ENCODE measurements at regions of chr4 and their contacts with region 1.

Region 1: GRCh38 chr4:158094413-158095134 is 78.3 kb downstream of the GASK1B start:
- DNase-seq: peak; percentile 78 to 80
- H3K4me3 ChIP-seq: no peak overlapping the region
- H3K4me3 Mint-ChIP-seq: peak overlapping the region; percentile 60
- H3K27ac Mint-ChIP-seq: peak overlapping the region; percentile 82
- H3K4me1 ChIP-seq: peaks cover 8% of the 10 kb centered on the region
- H3K4me1 Mint-ChIP-seq: peaks cover 12% of the 10 kb centered on the region
- H3K27me3 ChIP-seq: no peaks in the 10 kb centered on the region
- H3K27me3 Mint-ChIP-seq: no peaks in the 10 kb centered on the region
- CTCF ChIP-seq: no peak

Region 2: DNA sequence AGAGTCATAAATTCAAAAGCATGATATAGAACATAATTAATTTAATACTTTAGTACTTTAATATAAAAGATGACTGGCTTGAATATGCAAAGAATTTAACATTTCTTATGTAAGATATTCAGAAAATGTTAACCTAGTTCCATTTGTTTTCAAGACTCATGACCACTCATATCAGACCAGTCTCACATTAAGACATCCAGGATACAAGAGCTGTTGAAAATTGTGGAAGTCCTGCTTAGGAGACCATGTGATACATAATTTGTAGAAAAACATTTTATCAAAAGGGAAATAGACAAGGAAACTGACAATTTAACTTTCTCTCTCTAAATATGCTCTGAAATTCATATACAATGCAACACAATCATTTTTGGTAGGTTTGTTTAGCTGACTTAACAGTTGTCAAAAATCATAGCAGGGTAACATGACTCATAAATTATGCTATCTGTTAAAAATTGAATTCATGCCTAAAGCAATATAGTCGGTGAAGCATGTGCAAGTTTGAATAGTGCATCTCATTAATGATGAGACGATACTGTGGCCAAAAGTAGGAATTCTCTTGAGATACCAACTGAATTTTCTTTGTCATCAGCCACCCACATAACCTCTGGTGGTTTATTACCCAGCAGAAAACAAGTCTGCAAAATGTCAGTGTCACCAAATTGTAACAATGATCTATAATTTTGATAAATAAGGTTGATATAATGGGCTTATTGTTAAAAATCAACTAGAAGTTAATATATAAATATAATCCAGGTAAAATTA is 133.2 kb before region 1 on chr4:
- CTCF ChIA-PET with region 1: no interaction called
- POLR2A ChIA-PET with region 1: no interaction called
- intact Hi-C with region 1: no loop called
- DNase-seq: no peak
- H3K4me3 ChIP-seq: no peak overlapping the region
- H3K4me3 Mint-ChIP-seq: no peak overlapping the region
- H3K27ac Mint-ChIP-seq: no peak overlapping the region
- H3K4me1 ChIP-seq: no peaks in the 10 kb centered on the region
- H3K4me1 Mint-ChIP-seq: no peaks in the 10 kb centered on the region
- H3K27me3 ChIP-seq: no peaks in the 10 kb centered on the region
- H3K27me3 Mint-ChIP-seq: peaks cover 2% of the 10 kb centered on the region
- CTCF ChIP-seq: no peak

Region 3: GRCh38 chr4:158033416-158034120 is 61.0 kb before region 1 on chr4:
- CTCF ChIA-PET with region 1: no interaction called
- POLR2A ChIA-PET with region 1: no interaction called
- intact Hi-C with region 1: loop called (anchors 10 kb)
- DNase-seq: no peak
- H3K4me3 ChIP-seq: no peak overlapping the region
- H3K4me3 Mint-ChIP-seq: peak overlapping the region; percentile 59
- H3K27ac Mint-ChIP-seq: peak overlapping the region; percentile 16
- H3K4me1 ChIP-seq: peaks cover 3% of the 10 kb centered on the region; the same call in 1 of the 2 replicates
- H3K4me1 Mint-ChIP-seq: peaks cover 10% of the 10 kb centered on the region
- H3K27me3 ChIP-seq: no peaks in the 10 kb centered on the region
- H3K27me3 Mint-ChIP-seq: no peaks in the 10 kb centered on the region
- CTCF ChIP-seq: no peak

Region 4: DNA sequence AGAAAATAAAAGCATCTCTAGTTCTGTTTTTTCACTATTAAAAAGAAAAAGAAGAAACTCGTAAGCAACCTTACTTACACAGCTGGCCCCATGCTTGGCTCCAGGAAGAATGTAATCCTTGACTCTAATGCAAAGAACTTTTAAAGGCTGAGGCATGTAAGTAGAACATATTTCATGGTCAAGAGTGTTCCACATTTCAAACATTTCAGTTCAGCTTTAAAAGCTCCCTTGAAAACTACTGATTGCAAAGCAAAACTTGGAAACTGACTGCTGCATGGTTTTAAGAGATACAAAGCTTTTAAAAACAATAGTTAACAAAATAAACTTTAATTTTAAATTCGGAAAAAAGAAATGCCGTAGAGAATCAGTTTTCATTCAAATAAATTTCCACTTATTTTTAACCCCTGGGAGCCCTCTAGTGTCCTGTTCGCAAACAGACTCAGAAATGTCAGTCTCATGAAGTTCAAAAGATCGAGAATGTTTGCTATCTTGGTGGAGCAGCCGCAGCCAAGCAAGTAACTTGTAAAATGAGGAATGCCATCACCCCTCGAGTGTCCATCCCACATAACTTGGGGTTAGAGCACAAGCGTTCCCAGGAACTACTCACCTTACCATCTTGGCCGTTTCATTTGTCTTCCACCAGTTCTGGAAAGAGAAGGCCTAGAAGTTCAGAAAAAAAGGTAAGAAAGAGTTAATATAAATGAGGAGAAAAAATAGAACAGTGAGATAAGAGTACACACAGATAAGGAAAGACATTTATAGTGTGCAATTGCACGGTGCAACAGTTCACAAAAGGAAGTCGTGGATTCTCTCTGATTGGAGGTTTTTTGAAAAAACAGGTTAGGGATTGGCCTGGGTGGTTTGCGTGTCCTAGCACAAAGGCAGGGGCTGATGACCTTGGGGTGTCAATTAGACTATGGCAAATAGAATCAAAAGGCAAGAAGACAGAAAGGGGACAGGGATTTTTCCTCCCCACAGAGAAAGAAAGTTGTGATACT is 78.0 kb after region 1 on chr4 and contains the start of gene GASK1B:
- CTCF ChIA-PET with region 1: no interaction called
- POLR2A ChIA-PET with region 1: no interaction called
- intact Hi-C with region 1: loop called (anchors 2 kb)
- DNase-seq: peak; percentile 56 to 68
- H3K4me3 ChIP-seq: peak within 1 kb of the TSS; percentile 49
- H3K4me3 Mint-ChIP-seq: peak within 1 kb of the TSS; percentile 89
- H3K27ac Mint-ChIP-seq: peak within 1 kb of the TSS; percentile 97
- H3K4me1 ChIP-seq: peaks cover 14% of the 10 kb centered on the region
- H3K4me1 Mint-ChIP-seq: peaks cover 14% of the 10 kb centered on the region
- H3K27me3 ChIP-seq: no peaks in the 10 kb centered on the region
- H3K27me3 Mint-ChIP-seq: no peaks in the 10 kb centered on the region
- CTCF ChIP-seq: peak; percentile 25 to 27
- total RNA-seq, gene GASK1B: 42.5 and 48.5 TPM in 2 replicates

Region 5: DNA sequence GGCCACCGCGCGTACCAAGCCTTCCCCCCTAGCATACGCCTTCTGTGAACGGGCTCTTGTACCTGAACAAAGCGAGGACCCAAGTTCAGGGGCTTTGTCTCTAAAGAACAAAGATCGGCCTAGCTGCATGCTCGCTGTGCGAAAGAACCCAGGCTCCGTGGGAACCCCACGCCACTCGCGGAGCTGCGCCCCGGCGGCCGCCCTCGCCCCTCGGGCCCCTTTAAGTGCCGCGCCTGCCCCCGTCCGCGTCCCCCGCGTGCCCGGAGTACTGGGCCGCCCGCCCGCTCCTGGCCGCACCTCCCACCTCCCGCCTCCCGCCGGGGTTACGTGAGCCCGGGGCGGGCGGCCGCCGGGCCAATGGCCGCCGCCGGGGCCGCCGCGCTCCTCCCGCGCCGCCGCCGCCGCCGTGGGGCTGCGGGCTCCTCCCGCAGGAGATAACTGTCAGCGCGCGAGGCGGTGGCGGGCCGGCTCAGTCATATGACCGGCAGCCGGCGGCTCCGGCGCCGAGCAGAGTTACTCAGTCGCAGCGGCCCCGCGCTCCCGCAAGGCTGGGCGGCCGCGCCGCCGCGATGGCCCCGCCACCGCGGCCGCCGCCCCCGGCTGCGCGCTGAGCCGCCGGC is 674.1 kb after region 1 on chr4 and contains the start of gene FNIP2:
- CTCF ChIA-PET with region 1: no interaction called
- POLR2A ChIA-PET with region 1: no interaction called
- intact Hi-C with region 1: no loop called
- DNase-seq: peak; percentile 68 to 85
- H3K4me3 ChIP-seq: peak within 1 kb of the TSS; percentile 90
- H3K4me3 Mint-ChIP-seq: peak within 1 kb of the TSS; percentile 95
- H3K27ac Mint-ChIP-seq: peak within 1 kb of the TSS; percentile 73
- H3K4me1 ChIP-seq: peaks cover 9% of the 10 kb centered on the region
- H3K4me1 Mint-ChIP-seq: peaks cover 6% of the 10 kb centered on the region
- H3K27me3 ChIP-seq: no peaks in the 10 kb centered on the region
- H3K27me3 Mint-ChIP-seq: no peaks in the 10 kb centered on the region
- CTCF ChIP-seq: no peak
- total RNA-seq, gene FNIP2: 12.4 and 15.8 TPM in 2 replicates